ENCODE measurements at regions of chr20 and their contacts with region 1.

Region 1: DNA sequence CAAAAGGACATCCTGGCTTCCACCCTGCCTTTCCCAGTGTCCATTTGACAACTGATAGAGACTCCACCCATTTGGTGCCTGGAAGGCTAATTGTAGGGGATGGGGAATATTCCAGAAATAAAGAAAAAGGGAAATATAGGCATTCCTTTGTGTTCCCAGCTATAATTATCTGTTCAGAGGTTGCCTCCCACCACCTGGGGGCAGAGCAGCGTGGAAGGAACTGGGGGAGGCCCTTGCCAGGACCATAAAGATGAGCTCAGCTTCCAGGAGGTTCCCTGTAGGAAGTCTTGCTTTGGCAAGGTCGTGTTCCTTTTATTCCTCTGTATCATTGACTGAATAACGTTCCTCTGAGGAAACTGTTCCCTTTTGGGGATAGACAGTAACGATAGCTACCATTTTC is 214.7 kb downstream of the TFAP2C start:
- DNase-seq: peak; percentile 52
- ATAC-seq: peak; percentile 82
- H3K4me3 Mint-ChIP-seq: no peak overlapping the region
- H3K27ac Mint-ChIP-seq: no peak overlapping the region
- H3K4me1 Mint-ChIP-seq: peaks cover 10% of the 10 kb centered on the region
- H3K27me3 Mint-ChIP-seq: peaks cover 4% of the 10 kb centered on the region; the same call in 1 of the 2 replicates
- CTCF ChIP-seq: 0 out of 2 replicates have a peak, but pooled peaks have one; percentile 22

Region 2: DNA sequence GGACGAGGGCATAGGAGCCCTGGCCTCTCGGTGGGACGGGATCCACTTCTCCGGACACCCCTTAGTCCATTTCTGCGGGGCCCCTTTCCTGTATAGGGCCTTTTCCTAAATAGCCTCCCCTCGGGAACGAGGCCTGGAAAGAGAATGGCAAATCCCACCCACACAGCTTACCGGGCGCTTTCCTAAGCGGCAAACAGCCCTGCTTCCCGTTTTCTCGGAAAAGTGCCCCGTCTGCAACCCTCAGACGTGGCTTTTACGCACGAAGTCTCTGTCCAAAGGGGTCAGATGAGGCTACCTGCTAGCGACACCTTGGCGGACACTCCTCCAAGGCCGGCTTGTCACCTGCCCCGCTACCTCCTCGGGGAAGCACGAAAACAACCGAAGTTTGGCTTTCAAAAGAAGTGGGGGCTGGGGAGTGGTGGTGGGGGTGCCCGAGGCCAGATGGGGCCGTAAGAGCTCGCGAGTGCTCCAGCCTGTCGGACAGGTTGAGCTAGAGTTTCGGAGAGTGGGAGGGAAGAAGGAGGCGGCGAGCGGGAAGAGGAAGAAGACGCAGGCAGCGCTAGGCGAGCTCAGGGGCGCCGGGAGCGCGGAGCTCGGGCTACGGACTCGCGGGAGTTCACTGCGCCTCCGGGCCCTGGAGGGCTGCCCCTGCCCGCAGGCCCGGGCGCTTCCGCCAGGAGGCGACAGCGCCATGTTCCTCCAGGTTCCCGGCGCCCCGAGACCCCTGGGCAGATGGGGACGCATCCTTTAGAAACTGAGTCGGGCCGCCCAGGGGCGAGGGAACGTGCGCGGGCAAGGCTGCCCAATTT is 213.9 kb before region 1 on chr20:
- CTCF ChIA-PET with region 1: interaction called, 32 read pairs
- POLR2A ChIA-PET with region 1: no interaction called
- DNase-seq: peak; percentile 85
- ATAC-seq: peak; percentile 61
- H3K4me3 Mint-ChIP-seq: peak overlapping the region; percentile 83
- H3K27ac Mint-ChIP-seq: no peak overlapping the region
- H3K4me1 Mint-ChIP-seq: peaks cover 49% of the 10 kb centered on the region
- H3K27me3 Mint-ChIP-seq: peaks cover 70% of the 10 kb centered on the region
- CTCF ChIP-seq: peak; percentile 81

Region 3: DNA sequence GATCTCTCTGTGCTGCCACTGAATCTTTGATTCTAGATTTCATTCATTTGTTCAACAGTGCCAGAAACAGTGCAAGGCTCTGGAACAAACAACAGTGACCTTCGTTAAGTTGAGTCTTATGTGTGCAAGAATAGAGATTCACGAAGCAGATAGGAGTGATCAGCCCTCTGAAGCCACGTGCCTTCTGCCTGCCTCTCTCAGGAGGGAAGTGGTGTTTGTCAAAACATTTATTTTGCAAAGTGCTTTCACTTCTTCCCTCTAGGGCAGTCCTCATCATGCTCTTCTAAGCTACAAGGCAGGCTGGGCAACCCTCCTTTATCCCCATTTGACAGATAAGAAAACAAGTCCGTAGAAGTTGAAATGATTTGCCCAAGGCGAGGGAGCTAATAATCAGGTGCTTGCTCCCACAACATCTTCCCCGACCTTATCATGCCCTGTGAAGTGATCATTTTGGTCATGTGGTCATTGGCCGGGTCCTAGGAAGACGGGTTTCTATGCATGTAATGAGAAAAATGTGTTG is 10.3 kb before region 1 on chr20:
- CTCF ChIA-PET with region 1: interaction called, 17 read pairs
- POLR2A ChIA-PET with region 1: interaction called, 3 read pairs
- DNase-seq: no peak
- ATAC-seq: no peak
- H3K4me3 Mint-ChIP-seq: no peak overlapping the region
- H3K27ac Mint-ChIP-seq: no peak overlapping the region
- H3K4me1 Mint-ChIP-seq: peaks cover 54% of the 10 kb centered on the region
- H3K27me3 Mint-ChIP-seq: no peaks in the 10 kb centered on the region; the same call in 1 of the 2 replicates
- CTCF ChIP-seq: no peak

Region 4: GRCh38 chr20:56867132-56867531 is 23.3 kb after region 1 on chr20:
- CTCF ChIA-PET with region 1: interaction called, 43 read pairs
- POLR2A ChIA-PET with region 1: no interaction called
- DNase-seq: no peak
- ATAC-seq: peak; percentile 70
- H3K4me3 Mint-ChIP-seq: no peak overlapping the region
- H3K27ac Mint-ChIP-seq: no peak overlapping the region
- H3K4me1 Mint-ChIP-seq: peaks cover 12% of the 10 kb centered on the region
- H3K27me3 Mint-ChIP-seq: no peaks in the 10 kb centered on the region
- CTCF ChIP-seq: no peak

Region 5: GRCh38 chr20:56995576-56996075 is 151.8 kb after region 1 on chr20:
- CTCF ChIA-PET with region 1: interaction called, 13 read pairs
- POLR2A ChIA-PET with region 1: no interaction called
- DNase-seq: peak; percentile 78
- ATAC-seq: peak; percentile 95
- H3K4me3 Mint-ChIP-seq: no peak overlapping the region
- H3K27ac Mint-ChIP-seq: no peak overlapping the region
- H3K4me1 Mint-ChIP-seq: no peaks in the 10 kb centered on the region
- H3K27me3 Mint-ChIP-seq: peaks cover 6% of the 10 kb centered on the region
- CTCF ChIP-seq: peak; percentile 70

Region 6: DNA sequence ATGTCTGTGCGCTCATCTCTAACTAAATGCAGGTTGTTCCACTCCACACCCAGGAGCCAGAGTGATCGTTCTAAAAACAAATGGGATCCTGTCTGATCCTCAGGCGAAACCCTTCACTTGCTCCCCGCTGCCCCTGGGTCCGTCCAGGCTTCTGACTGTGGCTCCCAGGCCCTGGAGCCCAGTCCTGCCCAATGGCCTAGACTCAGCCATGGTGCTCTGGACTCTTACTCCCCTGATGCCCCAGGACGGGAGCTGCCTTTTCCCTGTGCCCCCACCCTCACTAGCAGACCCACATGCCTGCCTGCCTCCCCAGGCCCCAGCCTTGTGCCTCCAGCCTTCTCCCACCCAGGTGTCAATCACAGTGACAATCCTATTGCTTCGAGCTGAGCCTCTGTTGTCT is 166.0 kb after region 1 on chr20:
- CTCF ChIA-PET with region 1: no interaction called
- POLR2A ChIA-PET with region 1: no interaction called
- DNase-seq: no peak
- ATAC-seq: no peak
- H3K4me3 Mint-ChIP-seq: no peak overlapping the region
- H3K27ac Mint-ChIP-seq: no peak overlapping the region
- H3K4me1 Mint-ChIP-seq: peaks cover 8% of the 10 kb centered on the region
- H3K27me3 Mint-ChIP-seq: peaks cover 27% of the 10 kb centered on the region
- CTCF ChIP-seq: no peak

Measured in WTC11 (cell line).